Activated CD8-positive, alpha-beta T cell treated with anti-CD3 and anti-CD28 coated beads, Interleukin-2, amount 10 ng/mL, durations not matched to agents 7 days and 5 days (primary cell): ENCODE measurements at regions of chr16 and their contacts with region 1.

Region 1: GRCh38 chr16:67546761-67547422 is 15.4 kb upstream of the CTCF start:
- DNase-seq: peak; percentile 83
- ATAC-seq: peak; percentile 52
- H3K4me3 Mint-ChIP-seq: peak overlapping the region; percentile 64
- H3K27ac Mint-ChIP-seq: peak overlapping the region; percentile 99
- H3K4me1 Mint-ChIP-seq: peaks cover 55% of the 10 kb centered on the region
- H3K27me3 Mint-ChIP-seq: no peaks in the 10 kb centered on the region

Region 2: DNA sequence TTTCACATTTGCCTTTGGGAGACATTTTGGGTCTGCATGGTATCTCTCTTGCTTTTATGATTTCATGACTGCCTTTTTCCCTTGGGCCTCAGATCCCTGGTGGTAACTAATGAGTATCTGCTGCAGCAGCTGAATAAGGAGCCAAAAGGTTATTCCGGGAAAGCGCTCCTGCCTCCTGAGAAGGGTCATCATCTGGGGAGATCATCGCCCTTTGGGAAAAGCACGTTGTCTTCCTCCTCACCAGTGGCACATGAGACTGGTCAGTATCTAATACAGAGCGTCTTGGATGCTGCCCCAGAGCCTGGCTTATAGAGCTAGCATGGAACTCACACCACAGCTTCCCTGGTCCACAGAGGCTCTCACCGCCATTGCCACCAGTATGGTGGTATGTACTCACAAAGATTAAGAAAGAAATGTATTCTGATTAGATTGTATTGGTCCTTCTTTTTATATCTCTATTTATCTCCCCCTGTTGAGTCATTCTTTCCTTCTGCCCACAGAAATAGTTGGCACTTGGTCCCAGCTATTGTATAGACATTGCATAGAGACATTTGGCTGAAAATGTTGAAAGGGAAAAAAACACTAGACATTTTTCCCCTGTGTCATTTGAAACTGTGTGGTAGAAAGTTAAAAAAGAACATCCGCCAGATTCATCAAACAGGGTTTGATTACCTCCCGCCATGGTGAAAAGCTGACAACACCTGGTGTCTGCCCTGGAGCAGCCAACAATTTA is 161.9 kb before region 1 on chr16:
- CTCF ChIA-PET with region 1: no interaction called
- POLR2A ChIA-PET with region 1: no interaction called
- DNase-seq: no peak
- ATAC-seq: no peak
- H3K4me3 Mint-ChIP-seq: no peak overlapping the region
- H3K27ac Mint-ChIP-seq: no peak overlapping the region
- H3K4me1 Mint-ChIP-seq: no peaks in the 10 kb centered on the region
- H3K27me3 Mint-ChIP-seq: peaks cover 8% of the 10 kb centered on the region

Region 3: GRCh38 chr16:67480833-67481560 is 65.9 kb before region 1 on chr16 and contains the start of gene ATP6V0D1:
- CTCF ChIA-PET with region 1: interaction called, 18 read pairs
- POLR2A ChIA-PET with region 1: interaction called, 3 read pairs
- DNase-seq: peak; percentile 99
- ATAC-seq: peak; percentile 89
- H3K4me3 Mint-ChIP-seq: peak within 1 kb of the TSS; percentile 98
- H3K27ac Mint-ChIP-seq: peak within 1 kb of the TSS; percentile 99
- H3K4me1 Mint-ChIP-seq: peaks cover 38% of the 10 kb centered on the region
- H3K27me3 Mint-ChIP-seq: no peaks in the 10 kb centered on the region
- total RNA-seq, gene ATP6V0D1: 52.7 to 58.1 TPM

Region 4: GRCh38 chr16:67561824-67562525 is 15.1 kb after region 1 on chr16:
- CTCF ChIA-PET with region 1: interaction called, 296 read pairs
- POLR2A ChIA-PET with region 1: interaction called, 117 read pairs
- DNase-seq: peak; percentile 99
- ATAC-seq: peak; percentile 92
- H3K4me3 Mint-ChIP-seq: peak overlapping the region; percentile 88
- H3K27ac Mint-ChIP-seq: peak overlapping the region; percentile 95
- H3K4me1 Mint-ChIP-seq: peaks cover 43% of the 10 kb centered on the region
- H3K27me3 Mint-ChIP-seq: no peaks in the 10 kb centered on the region

Region 5: GRCh38 chr16:67595033-67595355 is 48.1 kb after region 1 on chr16:
- CTCF ChIA-PET with region 1: interaction called, 15 read pairs
- POLR2A ChIA-PET with region 1: interaction called, 3 read pairs
- DNase-seq: no peak
- ATAC-seq: no peak
- H3K4me3 Mint-ChIP-seq: no peak overlapping the region
- H3K27ac Mint-ChIP-seq: peak overlapping the region; percentile 5
- H3K4me1 Mint-ChIP-seq: peaks cover 25% of the 10 kb centered on the region
- H3K27me3 Mint-ChIP-seq: no peaks in the 10 kb centered on the region

Region 6: DNA sequence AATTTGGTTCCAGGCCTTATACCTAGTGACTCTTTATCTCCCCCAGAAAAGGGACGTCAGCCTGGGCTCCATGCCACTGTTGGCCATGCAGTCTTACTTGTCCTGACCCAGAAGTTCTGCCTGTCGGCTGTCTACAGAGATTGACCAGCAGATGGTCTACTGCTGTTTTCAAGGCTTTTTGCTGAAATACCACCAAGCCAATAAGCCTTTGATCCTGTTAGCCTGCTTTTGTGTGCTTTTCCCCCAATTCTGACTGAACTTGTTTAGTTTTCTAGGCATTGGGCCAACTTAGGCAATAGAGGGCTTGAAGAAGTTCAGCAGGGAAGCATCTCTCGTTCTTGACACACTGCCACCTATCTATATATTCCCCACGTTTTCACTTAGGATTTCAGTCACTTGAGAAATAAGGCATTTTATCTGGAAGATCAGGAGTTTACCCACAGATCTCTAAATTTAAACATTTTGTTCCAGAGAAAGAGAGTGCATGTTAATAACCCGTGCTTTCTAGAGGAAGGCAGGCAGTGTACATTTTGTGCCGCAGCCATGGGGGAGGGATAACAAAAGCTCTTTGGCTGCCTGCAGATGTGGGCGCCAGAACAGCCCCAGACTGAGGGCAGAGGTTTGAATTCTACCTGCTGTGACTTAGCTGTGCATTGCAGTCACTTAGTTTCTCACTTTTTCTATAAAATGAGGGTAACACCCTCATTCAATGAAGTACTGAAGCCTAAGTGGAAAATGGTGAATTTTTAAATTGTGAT is 85.7 kb after region 1 on chr16:
- CTCF ChIA-PET with region 1: interaction called, 14 read pairs
- POLR2A ChIA-PET with region 1: no interaction called
- DNase-seq: no peak
- ATAC-seq: no peak
- H3K4me3 Mint-ChIP-seq: no peak overlapping the region
- H3K27ac Mint-ChIP-seq: no peak overlapping the region
- H3K4me1 Mint-ChIP-seq: no peaks in the 10 kb centered on the region
- H3K27me3 Mint-ChIP-seq: no peaks in the 10 kb centered on the region

Region 7: DNA sequence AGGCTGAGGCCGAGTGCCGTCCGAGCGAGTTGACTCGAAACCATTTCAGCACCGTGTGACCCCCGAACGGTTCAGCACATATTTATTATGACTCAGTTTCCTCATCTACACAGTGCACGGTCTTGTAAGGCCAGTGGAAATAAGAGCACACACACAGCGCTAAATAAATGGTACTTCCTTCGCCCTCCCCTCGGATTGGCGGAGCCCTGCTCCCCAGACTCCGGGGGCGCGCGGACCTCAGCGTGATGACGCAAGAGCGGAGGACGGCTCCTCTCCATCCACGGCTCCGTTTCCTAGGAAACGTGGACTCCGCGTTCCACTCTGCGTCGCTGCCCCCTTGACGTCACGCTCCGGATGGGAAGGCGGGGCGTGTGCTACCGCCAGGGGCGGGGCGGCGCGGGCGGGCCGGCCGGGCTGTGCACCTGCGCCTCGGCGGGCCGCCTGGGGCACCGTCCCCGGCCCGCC is 113.7 kb after region 1 on chr16 and contains the start of gene PARD6A:
- CTCF ChIA-PET with region 1: interaction called, 83 read pairs
- POLR2A ChIA-PET with region 1: interaction called, 9 read pairs
- DNase-seq: peak; percentile 98
- ATAC-seq: peak; percentile 78
- H3K4me3 Mint-ChIP-seq: peak within 1 kb of the TSS; percentile 89
- H3K27ac Mint-ChIP-seq: peak within 1 kb of the TSS; percentile 96
- H3K4me1 Mint-ChIP-seq: peaks cover 31% of the 10 kb centered on the region
- H3K27me3 Mint-ChIP-seq: no peaks in the 10 kb centered on the region
- total RNA-seq, gene PARD6A: 13.2 to 14.7 TPM

Region 8: GRCh38 chr16:67773099-67773498 is 226.2 kb after region 1 on chr16:
- CTCF ChIA-PET with region 1: no interaction called
- POLR2A ChIA-PET with region 1: no interaction called
- DNase-seq: no peak
- ATAC-seq: no peak
- H3K4me3 Mint-ChIP-seq: no peak overlapping the region
- H3K27ac Mint-ChIP-seq: peak overlapping the region; percentile 8
- H3K4me1 Mint-ChIP-seq: no peaks in the 10 kb centered on the region
- H3K27me3 Mint-ChIP-seq: no peaks in the 10 kb centered on the region